Vagina (tissue), 2 donors: ENCODE measurements at regions of chr19 and their contacts with region 1.

Region 1: DNA sequence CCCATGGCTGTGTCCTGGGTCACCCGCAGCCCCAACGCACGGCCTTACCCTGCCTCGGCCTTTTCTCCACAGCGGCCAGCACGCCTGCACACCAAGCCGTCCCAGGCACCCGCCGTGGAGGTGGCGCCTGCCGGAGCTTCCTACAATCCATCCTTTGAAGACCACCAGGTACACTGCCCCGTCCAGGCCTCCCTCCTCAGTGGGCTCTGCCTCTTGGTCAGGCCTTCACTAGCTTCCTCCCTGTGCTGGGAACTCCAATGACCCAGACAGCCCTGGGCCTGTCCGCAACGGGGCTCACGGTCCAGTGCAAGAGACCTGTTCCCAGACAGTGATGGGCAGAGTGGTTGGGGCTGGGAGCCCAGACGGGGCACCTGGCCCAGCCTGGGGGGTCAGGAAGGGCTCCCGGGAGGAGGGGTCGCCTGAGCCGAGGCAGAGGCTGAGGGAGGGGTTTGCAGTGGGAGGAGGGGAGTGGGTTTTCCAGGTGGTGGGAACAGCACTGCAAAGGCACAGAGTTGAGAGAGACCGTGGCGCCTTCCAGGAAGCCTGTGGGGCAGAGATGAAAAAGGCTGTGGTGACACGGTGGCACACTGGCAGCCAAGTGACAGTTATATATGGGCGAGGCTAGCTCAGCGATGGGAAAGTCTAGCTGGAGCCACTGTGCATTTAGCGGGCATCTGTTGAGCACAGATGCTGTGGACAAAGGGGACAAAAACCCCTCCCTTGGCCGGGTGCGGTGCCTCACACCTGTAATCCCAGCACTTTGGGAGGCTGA is 7.3 kb downstream of the NOP53 start:
- DNase-seq: no peak
- H3K4me3 ChIP-seq: no peak overlapping the region
- H3K27ac ChIP-seq: no peak overlapping the region
- H3K4me1 ChIP-seq: peaks cover 22% of the 10 kb centered on the region
- H3K27me3 ChIP-seq: no peaks in the 10 kb centered on the region
- CTCF ChIP-seq: no peak
- POLR2A ChIP-seq: no peak

Region 2: GRCh38 chr19:47790398-47790814 is 37.8 kb after region 1 on chr19:
- intact Hi-C with region 1: loop called (anchors 5 kb)
- DNase-seq: no peak
- H3K4me3 ChIP-seq: no peak overlapping the region
- H3K27ac ChIP-seq: no peak overlapping the region
- H3K4me1 ChIP-seq: no peaks in the 10 kb centered on the region
- H3K27me3 ChIP-seq: no peaks in the 10 kb centered on the region
- CTCF ChIP-seq: peak; percentile 6 to 85 (median 63)
- POLR2A ChIP-seq: no peak